MCF 10A (cell line): ENCODE measurements at regions of chr15 and their contacts with region 1.

Region 1: DNA sequence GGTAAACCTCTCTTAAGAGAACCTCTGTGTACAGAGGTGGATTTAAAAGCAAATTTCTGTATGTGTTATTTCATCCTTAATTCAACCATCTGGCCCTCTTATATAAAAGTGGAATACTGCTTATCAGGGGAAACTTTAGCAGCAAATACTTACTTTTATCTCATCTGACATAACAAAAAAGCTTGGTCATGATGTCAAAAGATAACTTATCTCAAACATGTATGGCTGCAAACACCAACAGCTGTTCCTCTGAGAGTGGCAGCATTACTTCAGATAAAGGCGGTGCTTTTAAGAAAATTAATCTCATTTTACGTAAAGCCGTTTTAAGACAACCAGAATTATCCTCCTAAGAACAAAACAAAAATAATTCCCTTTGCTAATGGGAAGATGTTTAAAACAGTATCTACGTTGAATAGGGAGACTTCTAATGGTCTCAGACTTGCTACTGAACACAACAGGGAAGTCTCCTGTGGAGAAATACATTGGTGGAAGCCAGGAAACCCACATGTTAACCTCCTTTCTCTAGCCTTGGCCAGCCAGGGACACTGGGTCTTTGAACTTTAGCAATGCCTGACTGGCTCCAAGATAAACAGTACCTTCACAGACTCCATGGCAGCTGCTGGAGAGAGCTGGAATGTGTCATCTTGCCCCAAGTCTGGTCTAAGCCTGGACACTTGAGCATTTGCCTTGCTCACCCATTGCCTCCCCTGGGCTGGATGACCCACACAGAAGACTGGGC is 18.1 kb downstream of the ARRDC4 start:
- DNase-seq: peak; percentile 64
- H3K4me3 Mint-ChIP-seq: no peak overlapping the region
- H3K27ac Mint-ChIP-seq: peak overlapping the region; percentile 51
- H3K4me1 Mint-ChIP-seq: peaks cover 39% of the 10 kb centered on the region
- H3K27me3 Mint-ChIP-seq: no peaks in the 10 kb centered on the region
- CTCF ChIP-seq: no peak

Region 2: DNA sequence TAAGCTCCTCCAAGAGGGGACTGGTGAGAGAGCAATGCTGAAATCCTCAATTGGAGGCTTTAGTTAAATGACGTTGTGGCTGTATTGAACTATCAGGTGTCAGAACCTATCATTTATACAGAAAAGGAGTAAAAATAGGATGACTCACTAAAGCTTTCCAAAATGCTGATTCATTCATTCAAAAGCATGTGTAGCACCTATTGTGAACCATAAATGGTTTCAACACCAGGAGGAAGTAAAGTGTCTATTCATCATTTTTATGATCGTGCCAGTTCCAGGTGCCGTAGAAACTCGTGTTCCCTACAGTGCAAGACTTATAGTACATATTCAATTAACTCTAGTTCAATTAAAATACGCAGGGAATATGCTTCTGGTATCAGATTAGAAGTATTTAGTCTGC is 84.6 kb before region 1 on chr15:
- CTCF ChIA-PET with region 1: no interaction called
- POLR2A ChIA-PET with region 1: no interaction called
- intact Hi-C with region 1: no loop called
- DNase-seq: peak; percentile 42
- H3K4me3 Mint-ChIP-seq: no peak overlapping the region
- H3K27ac Mint-ChIP-seq: no peak overlapping the region
- H3K4me1 Mint-ChIP-seq: no peaks in the 10 kb centered on the region
- H3K27me3 Mint-ChIP-seq: peaks cover 2% of the 10 kb centered on the region
- CTCF ChIP-seq: no peak

Region 3: GRCh38 chr15:97968380-97968779 is 10.2 kb before region 1 on chr15:
- CTCF ChIA-PET with region 1: interaction called, 8 read pairs
- POLR2A ChIA-PET with region 1: interaction called, 11 read pairs
- intact Hi-C with region 1: no loop called
- DNase-seq: peak; percentile 27
- H3K4me3 Mint-ChIP-seq: no peak overlapping the region
- H3K27ac Mint-ChIP-seq: no peak overlapping the region
- H3K4me1 Mint-ChIP-seq: peaks cover 23% of the 10 kb centered on the region
- H3K27me3 Mint-ChIP-seq: no peaks in the 10 kb centered on the region
- CTCF ChIP-seq: no peak